ENCODE measurements at regions of chr6 and their contacts with region 1.

Region 1: GRCh38 chr6:39865011-39865888 is 69.0 kb downstream of the MOCS1 start:
- DNase-seq: no peak
- ATAC-seq: peak; percentile 59

Region 2: GRCh38 chr6:39791850-39792539 is 73.3 kb before region 1 on chr6 and contains the start of gene DAAM2:
- intact Hi-C with region 1: loop called (anchors 5 kb)
- DNase-seq: peak; percentile 80
- ATAC-seq: peak; percentile 92
- total RNA-seq, gene DAAM2: 14.7 TPM

Region 3: DNA sequence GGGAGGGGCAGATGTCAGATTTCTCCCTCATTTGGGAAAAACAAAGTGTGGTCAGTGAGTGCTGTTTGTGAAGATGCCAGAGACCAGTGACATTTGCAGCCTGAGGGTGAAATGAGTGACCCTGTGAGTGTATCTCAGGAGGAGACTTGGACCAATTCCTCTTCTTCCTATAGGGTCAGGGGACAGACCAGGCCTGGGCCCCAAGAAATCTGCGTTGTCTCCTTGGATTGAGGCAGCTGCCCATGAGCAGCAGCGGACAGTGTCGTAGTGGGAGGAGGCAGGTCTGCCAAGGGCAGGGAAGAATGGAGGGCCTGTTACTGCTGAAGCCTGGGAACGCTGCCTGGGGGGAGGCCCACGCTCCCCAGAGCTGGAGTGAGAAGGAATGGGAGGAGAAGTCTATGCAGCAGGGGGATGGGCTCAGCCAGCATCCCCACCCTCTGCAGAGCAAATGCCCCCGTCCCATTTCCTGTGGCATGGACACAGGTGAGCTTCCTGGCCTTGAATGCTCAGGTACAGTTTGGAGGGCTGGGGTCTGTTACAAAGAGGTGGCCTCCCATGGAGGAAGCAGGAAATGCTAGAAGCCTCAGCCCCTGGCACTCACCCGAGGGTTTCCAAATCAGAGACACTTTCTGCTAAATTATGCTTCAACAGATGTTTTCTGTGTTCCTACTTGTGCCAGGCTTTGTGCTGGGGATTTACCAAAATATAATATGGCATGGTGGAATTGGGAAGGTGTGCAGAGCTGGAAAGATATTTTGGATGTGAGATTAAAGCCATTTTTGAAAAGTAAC is 43.3 kb before region 1 on chr6:
- intact Hi-C with region 1: loop called (anchors 5 kb)
- DNase-seq: peak; percentile 82
- ATAC-seq: peak; percentile 78

Region 4: GRCh38 chr6:39909661-39910060 is 44.4 kb after region 1 on chr6:
- intact Hi-C with region 1: no loop called
- DNase-seq: no peak
- ATAC-seq: no peak

Region 5: GRCh38 chr6:39961178-39961577 is 95.9 kb after region 1 on chr6:
- intact Hi-C with region 1: no loop called
- DNase-seq: no peak
- ATAC-seq: peak; percentile 37

Region 6: DNA sequence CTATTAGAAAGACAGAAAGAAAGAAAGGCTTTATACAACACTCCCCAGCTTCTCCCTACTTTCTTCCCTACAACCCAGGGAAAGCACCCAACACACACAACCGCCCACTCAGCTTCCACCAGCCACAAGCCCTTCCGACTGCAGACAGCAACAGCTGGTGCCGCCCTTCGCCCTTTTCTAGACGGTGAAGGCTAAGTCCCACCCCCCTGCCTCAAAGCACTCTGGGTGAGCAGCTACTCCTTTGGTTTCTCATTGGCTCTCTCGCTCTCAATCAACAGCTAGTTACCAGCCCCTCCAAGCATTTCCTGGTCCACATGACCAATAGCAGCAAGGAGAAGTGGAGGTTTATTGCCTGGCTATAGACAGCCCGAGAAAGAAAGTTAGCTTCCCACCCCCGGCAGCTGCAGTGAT is 299.1 kb after region 1 on chr6:
- intact Hi-C with region 1: no loop called
- DNase-seq: no peak
- ATAC-seq: no peak

Measured in Right ventricle myocardium inferior (tissue), 1 donor.